Heart left ventricle (tissue), 16 donors: ENCODE measurements at regions of chr2 and their contacts with region 1.

Region 1: DNA sequence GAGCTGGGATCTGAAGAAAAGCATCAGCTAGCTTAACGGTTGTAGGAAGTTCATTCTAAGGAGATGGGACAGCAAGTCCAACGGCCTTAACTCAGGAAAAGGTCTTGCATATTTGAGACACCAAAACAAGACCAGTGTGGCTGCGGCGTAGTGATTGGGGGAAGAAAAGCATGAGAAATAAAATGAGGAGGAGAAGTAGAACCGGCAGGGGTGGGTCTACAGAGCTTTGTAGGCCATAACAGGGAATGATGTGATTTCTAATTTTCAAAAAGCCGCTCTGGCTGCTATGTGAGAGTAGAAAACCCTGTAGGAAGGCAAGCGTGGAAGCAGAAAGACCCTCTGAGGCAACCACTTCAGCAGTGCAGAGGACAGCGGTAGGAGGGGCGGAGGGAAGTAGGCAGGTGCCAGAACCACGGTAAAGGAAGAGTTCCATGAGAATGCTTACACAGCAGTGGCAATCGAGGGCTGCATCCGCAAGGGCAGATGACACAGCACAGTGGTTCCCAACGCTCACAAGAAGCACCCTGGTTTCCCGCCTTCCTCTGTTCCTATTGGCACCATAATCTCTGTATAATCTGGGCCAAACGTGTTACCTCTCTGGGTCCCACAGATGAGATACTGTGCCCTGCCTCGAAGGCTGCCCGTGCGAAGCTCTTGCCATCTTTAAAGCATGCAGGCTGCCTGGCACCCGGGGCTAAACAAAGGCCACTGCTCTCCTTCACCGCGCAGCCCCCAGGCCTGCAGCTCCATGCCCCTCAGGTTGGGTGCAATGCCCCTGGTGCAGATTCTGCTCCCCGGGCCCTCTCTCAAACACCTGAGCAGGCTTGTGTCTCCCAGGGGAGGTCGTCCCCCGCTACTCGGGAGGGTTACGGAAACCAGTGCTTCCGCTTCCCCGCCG is 791 bp downstream of the ANKRD39 start:
- DNase-seq: peak in 3 of 5 donors; percentile 23 to 42 (median 37)
- ATAC-seq: peak in 1 of 4 donors; percentile 2
- H3K4me3 ChIP-seq: peak overlapping the region; percentile 54 to 97 (median 80)
- H3K27ac ChIP-seq: peak overlapping the region; percentile 16 to 88 (median 80)
- H3K4me1 ChIP-seq: peaks cover 0 to 47% (median 36%) of the 10 kb centered on the region in 12 donors
- H3K27me3 ChIP-seq: no peaks in the 10 kb centered on the region
- CTCF ChIP-seq: no peak
- POLR2A ChIP-seq: no peak

Region 2: DNA sequence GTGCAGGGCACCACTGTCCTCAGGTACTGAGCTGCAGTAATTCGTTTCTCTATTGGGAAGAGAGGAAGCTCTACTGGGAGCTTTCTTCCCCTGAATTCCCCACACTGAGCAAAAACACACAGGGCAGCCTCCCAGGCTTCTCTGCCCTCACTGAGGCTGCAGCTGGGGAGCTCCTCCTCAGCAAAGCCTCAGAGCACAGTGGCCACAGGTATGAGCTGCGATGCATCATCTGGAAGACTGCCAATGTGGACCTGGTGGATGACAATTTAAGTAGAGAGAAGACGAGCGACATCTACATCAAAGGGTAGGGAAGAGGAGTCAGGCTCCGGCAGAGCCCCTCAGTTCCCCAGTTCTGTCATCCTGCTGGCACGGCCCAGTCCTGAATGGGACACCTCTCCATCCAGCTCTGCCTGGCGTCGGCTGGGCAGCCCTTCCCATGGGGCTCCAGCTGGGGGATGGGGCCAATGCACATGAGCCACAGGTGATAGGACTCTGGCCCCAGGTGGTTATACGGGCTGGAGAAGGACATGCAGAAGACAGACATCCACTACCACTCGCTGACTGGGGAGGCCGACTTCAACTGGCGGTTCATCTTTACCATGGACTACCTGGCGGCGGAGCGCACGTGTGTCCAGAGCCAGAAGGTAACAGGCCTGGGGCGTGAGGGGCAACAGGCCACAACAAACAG is 154.8 kb before region 1 on chr2:
- intact Hi-C with region 1: no loop called
- DNase-seq: no peak
- ATAC-seq: no peak
- H3K4me3 ChIP-seq: no peak overlapping the region
- H3K27ac ChIP-seq: no peak overlapping the region
- H3K4me1 ChIP-seq: no peaks in the 10 kb centered on the region
- H3K27me3 ChIP-seq: no peaks in the 10 kb centered on the region
- CTCF ChIP-seq: no peak
- POLR2A ChIP-seq: no peak

Region 3: DNA sequence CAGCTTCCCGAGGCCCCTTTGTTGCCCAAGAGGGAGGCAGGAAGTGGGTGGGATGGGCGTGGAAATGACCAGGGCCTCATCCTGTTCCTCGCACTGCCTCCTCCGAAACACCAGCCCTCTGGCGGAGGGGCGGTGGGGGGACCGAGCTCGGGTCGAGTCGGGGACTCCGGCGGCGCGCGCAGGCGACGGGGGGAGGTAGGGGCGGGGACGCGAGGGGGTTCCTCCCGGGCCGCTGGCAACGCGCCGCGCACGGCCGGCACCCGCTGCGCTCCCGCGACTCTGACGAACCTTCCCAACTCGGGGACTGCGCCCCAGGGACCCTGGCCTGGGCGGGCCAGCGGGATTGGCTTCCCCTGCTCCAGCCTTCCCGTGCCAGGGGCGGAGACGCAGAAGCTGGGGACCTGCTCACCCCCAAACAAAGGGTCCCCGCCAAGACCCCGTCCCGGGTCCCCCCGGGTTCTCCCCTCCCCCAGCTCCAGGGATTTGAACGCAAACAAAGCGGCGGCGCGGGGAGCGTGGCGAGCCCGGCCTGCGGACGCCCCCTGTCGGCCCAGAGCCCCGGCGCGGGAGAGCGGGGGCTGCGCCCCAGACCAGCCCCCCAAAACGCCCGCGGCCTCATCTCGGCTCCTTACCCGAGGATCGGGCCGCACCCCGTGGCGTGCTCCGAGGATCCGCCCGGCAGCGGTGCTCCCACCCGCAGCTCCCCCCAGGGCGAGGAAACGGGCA is 11.7 kb after region 1 on chr2:
- intact Hi-C with region 1: loop called in 1 of 10 experiments (anchors 1 kb)
- DNase-seq: peak; percentile 90 to 95 (median 93)
- ATAC-seq: peak; percentile 68 to 74 (median 72)
- H3K4me3 ChIP-seq: peak overlapping the region; percentile 79 to 100 (median 98)
- H3K27ac ChIP-seq: peak overlapping the region; percentile 96 to 100 (median 98)
- H3K4me1 ChIP-seq: peaks cover 3 to 80% (median 51%) of the 10 kb centered on the region in 12 donors
- H3K27me3 ChIP-seq: peaks cover 0 to 27% (median 0%) of the 10 kb centered on the region in 9 donors
- CTCF ChIP-seq: peak; percentile 30 to 82 (median 64)
- POLR2A ChIP-seq: peak in 1 of 2 donors; percentile 40

Region 4: DNA sequence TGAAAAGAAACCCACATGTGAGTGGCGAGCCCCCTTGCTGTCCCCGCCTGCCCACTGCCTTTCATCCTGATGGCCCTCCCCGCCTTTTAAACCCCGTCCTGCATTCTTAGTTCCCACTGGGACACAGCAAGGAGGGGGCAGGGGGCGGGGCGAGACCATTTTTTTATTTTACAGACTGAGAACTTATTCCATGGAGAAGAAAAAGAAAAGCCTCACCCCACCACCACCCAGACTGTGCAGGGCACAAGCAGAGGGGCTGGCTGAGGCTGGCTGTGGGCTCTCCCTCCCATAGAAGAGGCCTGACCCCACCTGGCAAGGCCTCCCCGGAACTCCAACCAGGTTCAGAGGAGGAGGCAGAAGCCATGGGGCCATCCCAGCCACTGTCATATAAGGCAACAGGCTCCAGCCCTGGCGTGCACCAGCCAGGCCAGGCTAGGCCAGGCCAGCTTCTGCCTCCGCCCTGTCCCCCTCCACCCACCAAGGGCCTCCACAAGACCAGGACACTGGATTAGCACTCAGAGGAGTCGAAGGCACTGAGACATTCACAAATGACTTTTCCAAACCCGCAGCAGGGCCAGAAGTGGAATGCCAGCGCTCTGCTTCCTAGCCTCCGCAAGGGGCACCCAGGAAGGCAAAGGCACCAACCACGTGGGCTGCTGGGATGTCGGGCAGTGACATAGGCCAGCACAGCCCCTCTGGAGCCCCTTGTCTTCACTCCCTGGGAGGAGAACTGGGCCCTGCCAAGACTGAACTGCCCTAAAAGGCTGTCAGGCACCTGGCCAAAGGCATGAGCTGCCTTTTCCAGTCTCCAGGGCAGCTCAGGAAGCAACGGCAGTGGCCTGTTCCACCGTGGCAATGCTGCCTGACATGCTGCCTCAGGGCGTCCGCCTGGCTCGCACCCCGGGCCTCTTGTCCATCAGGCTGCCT is 50.4 kb after region 1 on chr2:
- intact Hi-C with region 1: loop called in 5 of 10 experiments (anchors 1 to 10 kb)
- DNase-seq: peak; percentile 88 to 94 (median 90)
- ATAC-seq: peak; percentile 93 to 96 (median 94)
- H3K4me3 ChIP-seq: peak overlapping the region in 10 of 12 donors; percentile 2 to 49 (median 31)
- H3K27ac ChIP-seq: peak overlapping the region; percentile 87 to 99 (median 92)
- H3K4me1 ChIP-seq: peaks cover 22 to 60% (median 44%) of the 10 kb centered on the region in 12 donors
- H3K27me3 ChIP-seq: no peaks in the 10 kb centered on the region
- CTCF ChIP-seq: peak in 2 of 12 donors; percentile 8 to 23
- POLR2A ChIP-seq: peak in 1 of 2 donors; percentile 56

Region 5: GRCh38 chr2:96933305-96934181 is 76.5 kb after region 1 on chr2:
- intact Hi-C with region 1: no loop called
- DNase-seq: peak in 2 of 5 donors; percentile 13 to 28
- ATAC-seq: no peak
- H3K4me3 ChIP-seq: no peak overlapping the region
- H3K27ac ChIP-seq: no peak overlapping the region
- H3K4me1 ChIP-seq: peaks cover 0 to 3% (median 0%) of the 10 kb centered on the region in 12 donors
- H3K27me3 ChIP-seq: no peaks in the 10 kb centered on the region
- CTCF ChIP-seq: no peak
- POLR2A ChIP-seq: no peak

Region 6: DNA sequence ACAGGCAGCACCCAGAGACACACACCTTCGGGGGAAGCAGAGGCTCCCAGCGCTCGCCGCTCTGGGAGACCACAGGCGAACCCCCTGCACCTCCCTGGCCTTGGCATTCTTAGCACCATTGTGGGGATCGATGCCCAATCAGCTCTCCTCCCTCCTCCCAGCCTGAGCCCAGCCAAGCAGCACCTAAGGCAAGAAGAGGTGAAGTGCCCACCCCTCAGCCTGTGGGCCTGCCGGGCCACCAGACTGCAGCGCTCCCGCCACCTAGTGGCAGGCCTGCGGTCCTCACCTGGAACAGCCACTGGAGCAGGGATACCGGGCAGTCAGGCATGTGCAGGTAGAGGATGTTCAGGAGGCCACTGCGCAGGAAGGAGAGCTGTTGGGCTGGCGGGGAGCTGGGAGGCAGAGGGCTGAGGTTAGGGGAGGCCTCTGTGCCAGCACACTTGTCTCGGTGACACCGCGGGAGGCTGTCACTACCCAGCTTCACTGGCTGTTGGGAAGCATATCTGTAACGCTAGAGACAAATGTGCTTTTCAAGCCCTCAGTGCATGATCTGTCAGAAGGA is 94.1 kb after region 1 on chr2:
- intact Hi-C with region 1: loop called (anchors 1 to 2 kb)
- DNase-seq: peak; percentile 72 to 89 (median 78)
- ATAC-seq: peak; percentile 74 to 92 (median 85)
- H3K4me3 ChIP-seq: no peak overlapping the region
- H3K27ac ChIP-seq: peak overlapping the region in 1 of 12 donors; percentile 71
- H3K4me1 ChIP-seq: peaks cover 0 to 41% (median 26%) of the 10 kb centered on the region in 12 donors
- H3K27me3 ChIP-seq: no peaks in the 10 kb centered on the region
- CTCF ChIP-seq: peak; percentile 85 to 98 (median 93)
- POLR2A ChIP-seq: no peak

Region 7: DNA sequence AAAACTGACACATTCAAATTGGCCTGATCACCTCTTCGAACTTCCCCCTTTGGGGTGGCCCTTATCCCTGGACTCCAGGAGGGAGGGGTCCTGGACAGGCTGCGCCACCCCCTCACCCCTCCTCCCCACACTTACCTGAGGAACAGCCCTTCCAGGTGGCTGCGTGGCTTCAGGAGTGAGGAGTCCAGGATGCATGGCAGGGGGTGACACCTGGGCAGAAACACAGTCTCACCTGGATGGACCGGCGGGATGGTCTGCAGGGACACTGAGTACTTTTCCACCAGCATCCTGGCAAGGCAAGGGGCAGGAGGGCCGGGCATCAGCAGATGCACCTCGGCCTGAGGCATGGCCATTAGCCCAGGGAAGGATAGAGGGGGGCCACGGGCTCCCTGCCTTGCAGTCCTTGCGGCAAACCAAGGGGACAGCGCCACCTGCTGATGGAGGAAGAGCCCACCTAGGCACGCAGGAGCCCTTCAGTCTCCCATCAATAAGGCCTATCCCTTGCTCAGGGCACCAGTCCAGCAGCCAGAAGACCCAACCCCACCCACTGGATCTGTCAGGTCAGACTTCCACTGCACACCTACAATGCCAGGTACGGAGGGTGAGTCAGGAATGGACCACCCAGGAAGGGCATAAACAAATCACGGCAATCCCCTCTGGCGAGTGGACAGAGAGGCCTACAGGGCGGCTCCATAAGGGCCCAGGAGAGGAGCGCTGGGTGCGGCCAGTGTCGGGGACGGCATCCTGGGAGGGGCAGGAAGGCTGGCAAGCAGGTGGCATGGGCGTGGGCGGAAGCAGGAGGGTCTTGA is 103.3 kb after region 1 on chr2:
- intact Hi-C with region 1: loop called in 2 of 10 experiments (anchors 1 kb)
- DNase-seq: peak; percentile 89 to 94 (median 90)
- ATAC-seq: peak; percentile 93 to 98 (median 96)
- H3K4me3 ChIP-seq: no peak overlapping the region
- H3K27ac ChIP-seq: no peak overlapping the region
- H3K4me1 ChIP-seq: no peaks in the 10 kb centered on the region
- H3K27me3 ChIP-seq: no peaks in the 10 kb centered on the region
- CTCF ChIP-seq: peak; percentile 86 to 97 (median 92)
- POLR2A ChIP-seq: no peak

Region 8: GRCh38 chr2:98691303-98691702 is 1834.3 kb after region 1 on chr2:
- intact Hi-C with region 1: no loop called
- DNase-seq: no peak
- ATAC-seq: peak in 2 of 4 donors; percentile 53 to 54
- H3K4me3 ChIP-seq: no peak overlapping the region
- H3K27ac ChIP-seq: no peak overlapping the region
- H3K4me1 ChIP-seq: peaks cover 0 to 21% (median 4%) of the 10 kb centered on the region in 12 donors
- H3K27me3 ChIP-seq: no peaks in the 10 kb centered on the region
- CTCF ChIP-seq: no peak
- POLR2A ChIP-seq: no peak